SK-N-SH (cell line): ENCODE measurements at regions of chr18 and their contacts with region 1.

Region 1: DNA sequence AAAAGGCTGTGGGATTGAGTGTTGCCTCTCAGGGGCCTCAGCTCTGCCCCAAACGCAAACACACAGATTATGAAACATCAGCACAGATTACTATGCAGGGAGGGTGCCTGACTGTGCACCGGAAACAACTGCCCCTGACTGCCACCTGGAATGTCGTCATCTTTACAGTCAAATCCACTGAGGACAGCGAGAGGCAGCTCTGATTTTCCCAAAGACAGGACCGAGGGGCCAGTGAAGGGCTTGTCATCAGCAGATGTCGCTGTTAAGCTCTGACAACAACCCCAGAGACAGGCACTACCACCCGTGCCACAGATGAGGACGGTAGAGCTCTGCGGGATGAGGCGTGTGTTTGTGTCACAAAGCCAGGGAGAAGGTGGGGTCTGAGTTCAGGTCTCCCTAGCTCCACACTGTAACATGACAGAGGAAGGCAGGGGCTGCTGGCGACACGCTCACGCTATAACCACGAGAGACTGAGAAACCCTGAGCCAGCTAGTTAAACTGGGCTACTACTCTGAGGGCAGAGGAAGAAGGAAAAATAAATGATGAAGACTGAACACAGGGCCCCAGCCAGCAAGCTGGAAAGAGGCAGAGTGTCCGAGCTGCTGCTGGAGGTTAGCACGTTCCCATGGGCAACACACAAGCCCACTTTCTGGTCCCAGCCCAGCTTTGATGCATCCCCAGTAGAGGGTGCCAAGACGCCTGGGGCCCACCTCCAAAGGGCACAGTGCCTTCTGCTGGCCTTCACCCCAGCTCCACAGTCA is 47.0 kb downstream of the PARD6G start:
- DNase-seq: no peak
- H3K4me3 ChIP-seq: no peak overlapping the region
- H3K27ac ChIP-seq: no peak overlapping the region
- H3K4me1 ChIP-seq: peaks cover 0 to 8% of the 10 kb centered on the region in 2 experiments; a peak in 1 of 4 replicates
- H3K27me3 ChIP-seq: no peaks in the 10 kb centered on the region
- CTCF ChIP-seq: no peak
- EP300 ChIP-seq: no peak
- RAD21 ChIP-seq: no peak

Region 2: DNA sequence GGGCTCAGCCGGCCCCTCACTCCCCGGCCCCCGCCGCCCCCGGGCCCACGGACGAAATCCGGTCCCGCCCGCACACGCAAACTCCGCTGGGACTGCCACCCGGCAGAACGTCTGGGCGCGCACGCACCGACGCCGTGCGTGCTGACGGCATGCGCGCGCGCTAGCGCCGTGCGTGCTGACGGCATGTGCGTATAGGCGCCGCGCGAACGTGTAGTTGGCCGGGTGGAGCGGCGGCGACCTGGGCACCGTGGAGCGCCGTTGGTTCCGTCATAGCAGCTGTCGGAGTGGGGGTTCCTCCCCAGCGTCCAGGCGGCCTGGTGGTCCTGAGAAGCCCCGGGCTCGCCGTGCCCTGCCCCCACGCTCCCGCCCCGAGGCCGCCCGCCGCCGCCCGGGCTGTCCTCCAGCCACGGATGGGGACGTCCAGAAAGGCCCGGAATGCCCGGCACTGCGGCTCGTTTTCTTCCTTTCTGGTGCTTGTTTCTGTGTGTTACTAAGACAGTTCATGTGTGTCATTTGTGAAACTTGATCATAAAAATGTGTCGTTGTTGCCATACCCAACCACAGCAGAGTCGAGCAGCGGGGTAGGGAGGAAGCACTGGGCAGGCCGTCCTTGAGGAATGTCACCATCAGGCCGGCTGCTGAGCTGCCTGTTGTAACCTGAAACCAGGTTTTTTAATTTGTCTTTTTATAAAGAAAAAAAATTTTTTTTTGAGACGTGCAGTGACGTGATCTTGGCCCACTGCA is 211.7 kb before region 1 on chr18 and contains the start of gene TXNL4A:
- CTCF ChIA-PET with region 1: no interaction called
- POLR2A ChIA-PET with region 1: no interaction called
- DNase-seq: peak; percentile 92
- H3K4me3 ChIP-seq: peak within 1 kb of the TSS; percentile 74 to 97
- H3K27ac ChIP-seq: peak within 1 kb of the TSS; percentile 85 to 86
- H3K4me1 ChIP-seq: peaks cover 4 to 11% of the 10 kb centered on the region in 2 experiments; a peak in 2 of 4 replicates
- H3K27me3 ChIP-seq: no peaks in the 10 kb centered on the region
- CTCF ChIP-seq: no peak
- EP300 ChIP-seq: no peak
- RAD21 ChIP-seq: no peak
- polyA plus RNA-seq, gene TXNL4A: 86.9 and 158 TPM in 2 replicates

Region 3: DNA sequence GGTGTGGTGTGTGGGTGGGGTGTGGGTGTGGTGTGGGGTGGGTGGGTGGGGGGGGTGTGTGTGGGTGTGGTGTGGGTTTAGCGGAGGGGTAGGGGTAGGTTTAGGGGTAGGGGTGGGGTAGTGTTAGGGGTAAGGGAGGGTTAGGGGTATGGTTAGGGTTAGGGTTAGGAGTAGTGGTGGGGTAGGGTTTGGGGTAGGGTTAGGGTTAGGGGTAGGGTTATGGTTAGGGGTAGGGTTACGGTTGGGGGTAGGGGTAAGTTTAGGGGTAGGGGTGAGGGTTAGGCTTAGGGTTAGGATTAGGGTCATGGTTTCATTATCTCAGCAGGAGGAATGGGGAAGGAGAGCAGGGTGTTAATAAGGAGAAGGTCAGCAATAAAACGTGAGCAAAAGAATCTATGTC is 58.3 kb after region 1 on chr18:
- CTCF ChIA-PET with region 1: interaction called, 10 read pairs
- POLR2A ChIA-PET with region 1: no interaction called
- DNase-seq: no peak
- H3K4me3 ChIP-seq: no peak overlapping the region
- H3K27ac ChIP-seq: no peak overlapping the region
- H3K4me1 ChIP-seq: no peaks in the 10 kb centered on the region
- H3K27me3 ChIP-seq: no peaks in the 10 kb centered on the region
- CTCF ChIP-seq: no peak
- EP300 ChIP-seq: no peak
- RAD21 ChIP-seq: no peak